PC-9 (cell line): ENCODE measurements at regions of chr19 and their contacts with region 1.

Region 1: GRCh38 chr19:10587022-10587789 is at the start of gene AP1M2:
- DNase-seq: peak; percentile 60 to 77
- H3K4me3 ChIP-seq: peak within 1 kb of the TSS; percentile 86
- H3K27ac ChIP-seq: peak within 1 kb of the TSS; percentile 58
- H3K4me1 ChIP-seq: peaks cover 8% of the 10 kb centered on the region; the same call in 1 of the 2 replicates
- H3K27me3 ChIP-seq: no peaks in the 10 kb centered on the region
- CTCF ChIP-seq: no peak
- total RNA-seq, gene AP1M2: 94.5 and 126 TPM in 2 replicates

Region 2: GRCh38 chr19:10471909-10472308 is 115.3 kb before region 1 on chr19:
- CTCF ChIA-PET with region 1: no interaction called
- POLR2A ChIA-PET with region 1: no interaction called
- intact Hi-C with region 1: no loop called
- DNase-seq: no peak
- H3K4me3 ChIP-seq: no peak overlapping the region
- H3K27ac ChIP-seq: no peak overlapping the region
- H3K4me1 ChIP-seq: no peaks in the 10 kb centered on the region
- H3K27me3 ChIP-seq: no peaks in the 10 kb centered on the region
- CTCF ChIP-seq: peak; percentile 65

Region 3: GRCh38 chr19:10499551-10500246 is 87.5 kb before region 1 on chr19:
- CTCF ChIA-PET with region 1: no interaction called
- POLR2A ChIA-PET with region 1: no interaction called
- intact Hi-C with region 1: no loop called
- DNase-seq: no peak
- H3K4me3 ChIP-seq: no peak overlapping the region
- H3K27ac ChIP-seq: no peak overlapping the region
- H3K4me1 ChIP-seq: peaks cover 16% of the 10 kb centered on the region
- H3K27me3 ChIP-seq: no peaks in the 10 kb centered on the region
- CTCF ChIP-seq: no peak

Region 4: GRCh38 chr19:10625003-10625776 is 38.0 kb after region 1 on chr19 and contains the start of gene SLC44A2:
- CTCF ChIA-PET with region 1: no interaction called
- POLR2A ChIA-PET with region 1: no interaction called
- intact Hi-C with region 1: loop called (anchors 2 kb)
- DNase-seq: peak; percentile 76 to 95
- H3K4me3 ChIP-seq: peak within 1 kb of the TSS; percentile 83
- H3K27ac ChIP-seq: peak within 1 kb of the TSS; percentile 56
- H3K4me1 ChIP-seq: peaks cover 67% of the 10 kb centered on the region
- H3K27me3 ChIP-seq: no peaks in the 10 kb centered on the region
- CTCF ChIP-seq: no peak
- total RNA-seq, gene SLC44A2: 205 and 239 TPM in 2 replicates

Region 5: DNA sequence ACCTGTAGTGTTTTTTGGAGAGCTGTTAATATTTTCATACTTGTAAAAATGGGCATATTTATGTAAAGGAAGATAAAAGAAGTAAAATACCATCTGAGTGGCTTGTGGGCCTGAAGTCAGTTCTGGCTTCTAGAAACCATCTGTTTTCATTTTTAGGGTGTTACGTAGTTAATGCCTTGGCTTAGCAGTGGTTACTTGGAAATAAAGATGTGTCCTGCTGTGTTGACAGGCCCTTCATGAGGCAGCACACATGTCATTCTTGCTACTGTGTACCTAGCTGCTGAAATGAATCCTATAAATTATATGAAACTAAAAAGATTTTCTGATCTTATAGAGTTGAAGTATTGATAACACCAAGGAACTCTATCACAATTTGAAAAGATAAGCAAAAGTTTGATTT is 83.0 kb after region 1 on chr19:
- CTCF ChIA-PET with region 1: interaction called, 12 read pairs
- POLR2A ChIA-PET with region 1: no interaction called
- intact Hi-C with region 1: no loop called
- DNase-seq: no peak
- H3K4me3 ChIP-seq: no peak overlapping the region
- H3K27ac ChIP-seq: no peak overlapping the region
- H3K4me1 ChIP-seq: no peaks in the 10 kb centered on the region
- H3K27me3 ChIP-seq: no peaks in the 10 kb centered on the region
- CTCF ChIP-seq: no peak